Psoas muscle (tissue), 8 donors: ENCODE measurements at regions of chr2 and their contacts with region 1.

Region 1: GRCh38 chr2:30336978-30337841 is 105.9 kb downstream of the LBH start:
- DNase-seq: no peak
- ATAC-seq: no peak
- H3K4me3 ChIP-seq: no peak overlapping the region
- H3K27ac ChIP-seq: no peak overlapping the region
- H3K4me1 ChIP-seq: no peaks in the 10 kb centered on the region
- H3K27me3 ChIP-seq: peaks cover 0 to 3% (median 0%) of the 10 kb centered on the region in 3 donors
- CTCF ChIP-seq: no peak

Region 2: GRCh38 chr2:30178618-30179434 is 158.4 kb before region 1 on chr2:
- intact Hi-C with region 1: loop called in 1 of 2 experiments (anchors 10 kb)
- DNase-seq: peak; percentile 68 to 84
- ATAC-seq: peak; percentile 72 to 96 (median 96)
- H3K4me3 ChIP-seq: no peak overlapping the region
- H3K27ac ChIP-seq: peak overlapping the region; percentile 41
- H3K4me1 ChIP-seq: peaks cover 11% of the 10 kb centered on the region
- H3K27me3 ChIP-seq: peaks cover 0 to 11% (median 0%) of the 10 kb centered on the region in 3 donors
- CTCF ChIP-seq: no peak

Region 3: DNA sequence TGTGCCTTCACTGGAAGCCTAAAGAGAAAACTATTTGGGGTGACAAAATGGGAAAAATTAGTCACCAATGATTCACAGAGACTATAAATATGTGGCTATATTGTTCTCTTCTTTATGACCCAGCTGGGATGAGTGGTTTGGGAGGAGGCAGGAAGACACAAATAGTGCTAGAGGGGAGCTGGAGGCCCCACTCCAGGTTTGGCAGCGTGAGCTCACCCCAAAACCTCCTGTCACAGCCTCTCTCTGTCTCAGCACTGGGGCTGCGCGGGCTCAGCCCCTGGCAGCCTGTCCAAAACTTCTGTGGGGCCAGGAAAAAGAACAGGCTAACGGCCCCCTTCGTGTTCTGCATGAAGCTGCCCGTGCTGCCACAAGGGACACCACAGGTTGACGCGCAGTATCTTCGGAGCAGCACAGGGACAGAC is 36.7 kb after region 1 on chr2:
- intact Hi-C with region 1: no loop called
- DNase-seq: no peak
- ATAC-seq: no peak
- H3K4me3 ChIP-seq: no peak overlapping the region
- H3K27ac ChIP-seq: no peak overlapping the region
- H3K4me1 ChIP-seq: no peaks in the 10 kb centered on the region
- H3K27me3 ChIP-seq: no peaks in the 10 kb centered on the region
- CTCF ChIP-seq: no peak